Dendritic cell treated with granulocyte-macrophage colony-stimulating factor and Interleukin-4, amounts not matched to agents 40 ng/mL and 50 ng/mL, for 4 days (primary cell): ENCODE measurements at regions of chr17 and their contacts with region 1.

Region 1: GRCh38 chr17:67800495-67800928 is 24.8 kb upstream of the BPTF start:
- H3K4me3 Mint-ChIP-seq: no peak overlapping the region
- H3K27ac Mint-ChIP-seq: peak overlapping the region; percentile 56
- H3K4me1 Mint-ChIP-seq: peaks cover 7% of the 10 kb centered on the region
- H3K27me3 Mint-ChIP-seq: peaks cover 8% of the 10 kb centered on the region

Region 2: DNA sequence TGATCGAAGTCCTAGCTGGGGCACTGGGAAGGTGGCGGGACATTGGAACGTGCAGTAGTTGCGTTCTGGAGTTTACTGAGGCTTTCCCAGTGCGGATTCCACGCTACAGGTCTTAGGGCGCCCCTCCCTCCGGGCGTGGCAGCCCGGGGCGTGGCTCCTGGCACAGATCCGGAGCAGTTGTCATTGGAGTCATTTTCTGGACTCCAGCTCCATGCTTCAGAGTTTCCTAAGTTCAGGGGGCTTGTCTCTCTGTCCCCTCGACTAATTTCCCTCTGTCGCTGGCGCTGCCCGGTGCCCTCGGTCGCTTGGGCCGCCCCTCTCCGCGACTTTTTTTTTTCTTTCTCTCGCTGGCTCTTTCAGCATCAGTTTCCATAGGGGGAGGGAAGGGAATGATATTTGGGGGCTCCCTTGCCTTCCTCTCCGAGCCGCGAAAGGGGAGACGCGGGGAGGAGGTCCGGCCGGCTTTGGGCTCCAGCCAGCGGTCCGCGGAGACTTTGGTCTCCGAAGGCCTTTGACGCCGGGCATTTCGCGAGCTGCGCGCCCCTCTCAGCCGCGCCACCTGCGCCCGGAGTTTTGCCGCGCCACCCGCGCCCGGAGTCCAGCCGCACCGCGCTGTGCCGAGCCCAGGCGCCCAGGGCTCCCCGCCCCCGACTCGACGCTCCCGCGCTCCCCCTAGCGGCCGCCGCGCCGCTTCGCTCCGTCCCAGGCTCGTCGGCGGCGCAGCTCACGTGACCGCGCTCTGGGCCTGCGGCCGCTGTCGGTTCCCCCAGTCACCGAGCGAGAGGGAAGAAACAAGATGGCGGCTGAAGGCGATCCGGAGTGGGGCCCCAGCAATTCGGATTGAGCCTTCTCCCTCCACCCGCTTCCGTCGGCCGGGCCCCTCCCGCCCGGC is 24.5 kb after region 1 on chr17 and contains the start of gene BPTF:
- intact Hi-C with region 1: loop called (anchors 1 kb)
- H3K4me3 Mint-ChIP-seq: peak within 1 kb of the TSS; percentile 89
- H3K27ac Mint-ChIP-seq: peak within 1 kb of the TSS; percentile 84
- H3K4me1 Mint-ChIP-seq: peaks cover 26% of the 10 kb centered on the region
- H3K27me3 Mint-ChIP-seq: peaks cover 18% of the 10 kb centered on the region

Region 3: DNA sequence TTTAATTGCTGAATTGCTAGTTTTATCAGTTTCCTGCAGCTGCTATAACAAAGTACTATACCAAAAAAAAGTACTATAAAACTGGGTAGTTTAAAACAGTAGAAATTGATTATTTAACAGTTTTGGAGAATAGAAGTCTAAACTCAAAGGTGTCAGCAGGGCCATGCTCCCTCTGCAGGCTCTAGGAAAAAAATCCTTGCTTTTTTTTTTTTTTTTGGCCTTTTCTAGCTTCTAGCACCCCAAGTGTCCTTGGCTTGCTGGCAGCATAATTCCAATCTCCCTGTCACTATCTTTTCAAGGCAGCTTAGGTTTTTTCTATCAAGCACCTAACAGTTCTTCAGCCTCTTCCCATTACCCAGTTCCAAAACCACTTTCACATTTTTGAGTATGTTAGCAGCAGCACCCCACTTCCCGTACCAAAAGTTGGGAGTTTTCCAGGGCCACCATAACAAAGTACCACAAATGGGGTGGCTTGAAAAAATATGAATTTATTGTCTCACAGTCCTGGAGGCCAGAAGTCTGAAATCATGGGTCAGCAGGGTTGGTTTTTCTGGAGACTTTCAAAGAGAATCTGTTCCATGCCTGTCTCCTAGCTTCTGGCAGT is 62.2 kb after region 1 on chr17:
- intact Hi-C with region 1: loop called (anchors 5 kb)
- H3K4me3 Mint-ChIP-seq: no peak overlapping the region
- H3K27ac Mint-ChIP-seq: no peak overlapping the region
- H3K4me1 Mint-ChIP-seq: peaks cover 27% of the 10 kb centered on the region
- H3K27me3 Mint-ChIP-seq: no peaks in the 10 kb centered on the region

Region 4: DNA sequence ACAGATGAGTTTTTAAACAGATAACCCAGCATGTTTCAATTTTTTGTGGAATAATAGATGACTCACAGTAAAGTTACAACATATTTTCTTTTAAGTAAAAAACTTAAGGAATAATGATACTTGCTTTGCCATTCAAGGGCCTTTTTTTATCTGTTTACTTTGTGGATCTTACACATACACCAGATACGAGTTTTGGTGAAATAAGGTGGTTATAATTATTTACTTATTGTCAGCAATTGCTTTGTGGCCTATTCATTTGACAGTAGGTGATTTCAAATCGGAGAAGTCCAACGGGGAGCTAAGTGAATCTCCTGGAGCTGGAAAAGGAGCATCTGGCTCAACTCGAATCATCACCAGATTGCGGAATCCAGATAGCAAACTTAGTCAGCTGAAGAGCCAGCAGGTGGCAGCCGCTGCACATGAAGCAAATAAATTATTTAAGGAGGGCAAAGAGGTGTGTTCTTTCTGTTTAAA is 91.1 kb after region 1 on chr17:
- intact Hi-C with region 1: loop called (anchors 10 kb)
- H3K4me3 Mint-ChIP-seq: no peak overlapping the region
- H3K27ac Mint-ChIP-seq: no peak overlapping the region
- H3K4me1 Mint-ChIP-seq: no peaks in the 10 kb centered on the region
- H3K27me3 Mint-ChIP-seq: no peaks in the 10 kb centered on the region

Region 5: GRCh38 chr17:68057531-68057952 is 257.0 kb after region 1 on chr17:
- intact Hi-C with region 1: no loop called
- H3K4me3 Mint-ChIP-seq: no peak overlapping the region
- H3K27ac Mint-ChIP-seq: no peak overlapping the region
- H3K4me1 Mint-ChIP-seq: peaks cover 19% of the 10 kb centered on the region
- H3K27me3 Mint-ChIP-seq: no peaks in the 10 kb centered on the region